Kidney (tissue), 22 donors: ENCODE measurements at regions of chr7 and their contacts with region 1.

Region 1: DNA sequence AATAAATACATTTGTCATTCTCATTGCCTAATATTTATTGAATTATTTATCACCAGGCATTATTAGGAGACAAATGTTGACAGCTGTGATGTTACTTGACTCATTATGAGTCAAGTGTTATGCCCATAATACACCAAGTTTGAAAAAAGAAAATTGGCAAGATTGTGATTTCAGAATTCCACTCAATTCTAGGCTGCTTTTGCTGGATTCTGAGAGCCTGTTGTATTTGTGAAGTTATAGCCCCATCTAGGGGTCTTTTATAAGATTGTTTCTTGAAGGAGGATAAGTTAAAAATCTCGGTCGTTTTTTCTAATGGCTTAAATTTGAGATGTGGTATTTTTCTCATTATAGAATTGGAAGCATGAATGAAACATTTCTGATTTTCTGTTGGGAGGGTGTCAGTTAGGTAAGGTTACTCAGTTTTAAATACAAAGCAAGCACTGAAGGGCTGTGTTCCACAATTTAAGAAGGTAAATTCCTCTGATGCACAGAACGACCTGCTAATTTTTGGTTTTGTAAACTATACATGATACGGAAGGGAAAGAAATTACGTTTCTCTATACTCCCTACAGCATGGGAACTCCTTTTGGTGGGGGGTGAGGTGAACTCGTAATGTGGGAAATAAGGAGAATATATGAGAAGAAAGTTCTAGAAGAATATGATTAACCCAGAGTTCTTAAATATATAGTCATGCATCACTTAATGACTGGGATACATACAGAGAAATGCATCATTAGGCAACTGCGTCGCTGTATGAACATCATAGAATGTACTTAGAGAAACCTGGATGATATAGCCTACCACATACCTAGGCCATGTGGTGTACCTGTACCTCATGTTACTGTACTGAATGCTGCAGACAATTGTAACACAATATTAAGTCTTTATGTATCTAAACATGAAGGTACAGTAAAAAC is 2.6 kb downstream of the STK31 start:
- DNase-seq: peak in 2 of 5 donors; percentile 77 to 81
- H3K4me3 ChIP-seq: no peak overlapping the region
- H3K27ac ChIP-seq: no peak overlapping the region
- H3K4me1 ChIP-seq: no peaks in the 10 kb centered on the region
- H3K27me3 ChIP-seq: no peaks in the 10 kb centered on the region
- CTCF ChIP-seq: peak; percentile 61

Region 2: DNA sequence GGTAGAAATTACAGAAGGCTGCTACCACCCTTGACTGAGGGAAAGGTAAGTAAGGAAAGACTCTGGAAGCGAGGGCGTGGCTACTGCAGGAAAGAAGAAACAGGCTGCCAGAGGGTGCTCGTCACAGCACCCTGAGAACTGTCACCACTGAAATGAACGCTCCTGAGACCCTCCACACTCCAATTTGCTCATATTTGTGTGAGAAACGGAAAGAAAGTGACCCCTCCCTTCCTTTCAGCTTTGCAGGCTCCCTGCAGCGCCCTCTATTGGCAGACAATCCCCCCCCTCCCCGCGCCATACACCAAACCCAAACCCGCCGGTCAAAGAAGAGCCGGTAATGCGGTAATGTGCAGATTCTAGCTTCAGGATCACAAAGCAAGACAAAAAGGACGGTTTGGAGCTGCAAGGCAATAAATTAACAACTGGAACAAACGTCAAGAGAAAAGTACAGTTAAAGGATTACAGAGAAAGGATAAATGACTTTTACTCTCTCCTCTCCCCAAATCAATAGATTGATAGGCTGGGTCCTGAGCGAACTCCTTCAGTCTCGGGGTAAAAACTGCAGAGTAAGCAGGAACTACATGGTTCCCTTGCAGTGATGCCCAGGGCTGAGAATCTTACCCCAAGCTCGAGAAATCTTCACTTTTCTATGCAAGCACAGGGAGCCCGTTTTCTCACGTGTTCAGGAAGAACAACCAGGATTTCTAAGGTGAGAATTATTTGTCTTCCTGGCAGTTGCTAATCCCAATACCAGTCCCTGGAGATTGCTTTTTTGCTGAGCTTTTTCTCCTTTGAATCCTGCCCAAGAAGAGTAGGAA is 1260.3 kb before region 1 on chr7:
- intact Hi-C with region 1: no loop called
- DNase-seq: peak in 4 of 5 donors; percentile 74 to 82 (median 81)
- H3K4me3 ChIP-seq: peak overlapping the region; percentile 30 to 55 (median 36)
- H3K27ac ChIP-seq: no peak overlapping the region
- H3K4me1 ChIP-seq: peaks cover 0 to 3% (median 0%) of the 10 kb centered on the region in 3 donors
- H3K27me3 ChIP-seq: no peaks in the 10 kb centered on the region
- CTCF ChIP-seq: peak; percentile 48

Region 3: DNA sequence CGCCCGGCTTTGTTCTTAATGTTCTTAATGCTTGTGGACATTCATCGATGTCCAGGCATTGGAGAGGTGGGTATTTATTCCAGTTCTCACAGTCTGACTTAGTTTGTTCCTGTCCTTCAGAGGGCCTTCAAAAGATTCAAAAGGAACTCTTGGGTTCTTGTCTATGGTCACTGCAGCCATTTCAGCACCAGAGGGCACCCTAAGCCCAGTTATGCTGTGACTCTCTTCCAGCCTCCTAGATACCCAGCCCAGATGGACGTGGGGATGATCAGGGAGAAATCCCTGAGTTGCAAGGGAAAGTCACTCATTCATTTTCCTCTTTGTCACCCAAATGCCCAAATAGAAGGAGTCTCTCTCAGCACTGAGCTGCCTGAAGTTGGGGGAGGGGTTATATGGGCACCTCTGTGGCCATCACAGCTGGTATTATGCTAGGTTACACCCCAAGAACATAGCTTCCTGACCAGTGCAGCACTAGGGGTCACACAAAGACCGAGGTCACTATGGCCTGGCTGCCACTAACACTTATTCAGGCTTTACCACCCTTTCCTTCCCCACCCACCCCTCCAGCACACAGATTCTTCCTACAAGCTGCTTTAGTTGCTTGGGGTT is 141.9 kb before region 1 on chr7:
- intact Hi-C with region 1: loop called (anchors 5 kb)
- DNase-seq: peak; percentile 72 to 91 (median 83)
- H3K4me3 ChIP-seq: no peak overlapping the region
- H3K27ac ChIP-seq: no peak overlapping the region
- H3K4me1 ChIP-seq: no peaks in the 10 kb centered on the region
- H3K27me3 ChIP-seq: no peaks in the 10 kb centered on the region
- CTCF ChIP-seq: peak; percentile 90

Region 4: GRCh38 chr7:23981320-23981719 is 268.7 kb after region 1 on chr7:
- intact Hi-C with region 1: no loop called
- DNase-seq: no peak
- H3K4me3 ChIP-seq: no peak overlapping the region
- H3K27ac ChIP-seq: no peak overlapping the region
- H3K4me1 ChIP-seq: no peaks in the 10 kb centered on the region
- H3K27me3 ChIP-seq: no peaks in the 10 kb centered on the region
- CTCF ChIP-seq: no peak